ENCODE measurements at regions of chr18 and their contacts with region 1.

Region 1: DNA sequence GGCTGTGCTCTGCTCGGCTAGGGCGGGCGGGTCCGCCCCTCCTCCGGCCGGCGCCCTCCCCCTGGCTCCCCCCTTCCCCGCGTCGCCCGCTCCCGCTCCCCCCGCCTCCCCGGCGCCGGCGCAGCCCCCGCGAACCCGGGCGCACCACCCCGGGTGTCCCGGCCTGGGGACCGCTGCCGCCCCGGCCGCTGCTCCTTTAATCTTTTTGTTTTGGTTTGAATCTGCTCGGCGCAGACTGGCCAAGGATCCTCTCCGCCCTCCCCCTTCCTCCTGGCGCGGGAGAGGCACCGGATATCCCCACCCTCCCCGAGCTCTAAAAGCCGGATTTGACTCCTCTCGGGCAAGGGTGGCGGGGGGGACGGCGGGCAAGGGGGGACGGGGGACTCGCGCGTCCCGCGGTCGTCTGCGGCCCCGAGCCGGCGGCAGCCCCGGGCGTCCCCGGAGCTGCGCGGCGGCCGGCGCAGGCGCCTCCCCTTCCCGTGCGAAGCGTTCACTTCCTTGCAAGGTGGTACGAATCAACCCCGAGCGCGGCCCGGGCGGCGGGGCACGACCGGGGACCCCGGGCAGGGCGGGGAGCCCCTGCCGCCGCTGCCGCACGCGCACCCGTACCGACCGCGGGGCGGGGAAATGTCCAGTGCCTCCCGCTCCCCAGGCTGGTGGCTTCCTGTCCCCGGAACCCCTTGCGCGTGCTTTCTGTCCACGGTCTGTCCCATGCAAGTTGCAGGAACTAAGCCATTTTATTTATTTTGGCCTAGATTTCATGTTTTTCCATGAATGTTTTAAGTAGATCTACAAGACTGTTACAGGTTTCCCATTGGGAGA is at the start of gene PTGR3:
- DNase-seq: peak; percentile 87
- H3K4me3 ChIP-seq: peak within 1 kb of the TSS; percentile 88 to 93
- H3K27ac ChIP-seq: peak within 1 kb of the TSS; percentile 93 to 97
- H3K4me1 ChIP-seq: peaks cover 18% of the 10 kb centered on the region
- H3K27me3 ChIP-seq: no peaks in the 10 kb centered on the region
- CTCF ChIP-seq: no peak
- POLR2A ChIP-seq: no peak
- total RNA-seq, gene PTGR3: 13.9 to 27.9 TPM

Region 2: GRCh38 chr18:75066936-75067335 is 142.4 kb before region 1 on chr18:
- intact Hi-C with region 1: no loop called
- DNase-seq: no peak
- H3K4me3 ChIP-seq: no peak overlapping the region
- H3K27ac ChIP-seq: no peak overlapping the region
- H3K4me1 ChIP-seq: no peaks in the 10 kb centered on the region
- H3K27me3 ChIP-seq: no peaks in the 10 kb centered on the region
- CTCF ChIP-seq: no peak
- POLR2A ChIP-seq: no peak

Region 3: DNA sequence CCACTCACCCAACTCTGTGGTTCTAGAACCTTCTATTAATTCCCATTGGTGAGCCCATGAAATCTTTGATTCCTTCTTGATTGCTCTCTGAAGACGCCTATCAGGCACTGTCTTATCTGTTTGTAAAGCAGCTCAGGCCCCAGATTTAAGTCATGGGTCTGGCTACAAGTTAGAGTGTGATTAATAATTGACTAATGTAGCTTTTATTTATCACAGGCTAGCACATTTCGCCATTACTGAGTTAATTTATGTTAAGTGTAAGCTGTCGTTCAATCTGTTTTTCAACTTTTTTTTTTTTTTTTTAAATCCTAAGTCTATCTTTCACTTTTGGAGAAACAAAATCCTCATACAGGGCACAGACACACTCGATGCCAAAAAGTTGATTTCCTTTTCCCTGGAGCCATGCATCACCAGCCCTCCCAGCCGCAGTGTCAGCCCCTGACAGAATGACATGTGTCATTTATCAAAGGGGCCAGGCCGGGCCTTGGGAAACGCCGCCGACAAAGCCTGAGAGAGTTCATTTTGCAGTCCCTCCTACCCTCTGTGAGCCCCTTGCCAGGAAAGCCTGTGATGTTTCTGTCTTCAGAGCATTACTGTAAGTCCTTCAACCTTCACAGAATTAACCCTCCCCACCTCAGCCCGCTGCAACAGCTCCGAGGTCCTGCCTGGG is 17.1 kb after region 1 on chr18:
- intact Hi-C with region 1: no loop called
- DNase-seq: no peak
- H3K4me3 ChIP-seq: no peak overlapping the region
- H3K27ac ChIP-seq: peak overlapping the region; percentile 37 to 59
- H3K4me1 ChIP-seq: peaks cover 30% of the 10 kb centered on the region
- H3K27me3 ChIP-seq: no peaks in the 10 kb centered on the region
- CTCF ChIP-seq: no peak
- POLR2A ChIP-seq: no peak

Region 4: DNA sequence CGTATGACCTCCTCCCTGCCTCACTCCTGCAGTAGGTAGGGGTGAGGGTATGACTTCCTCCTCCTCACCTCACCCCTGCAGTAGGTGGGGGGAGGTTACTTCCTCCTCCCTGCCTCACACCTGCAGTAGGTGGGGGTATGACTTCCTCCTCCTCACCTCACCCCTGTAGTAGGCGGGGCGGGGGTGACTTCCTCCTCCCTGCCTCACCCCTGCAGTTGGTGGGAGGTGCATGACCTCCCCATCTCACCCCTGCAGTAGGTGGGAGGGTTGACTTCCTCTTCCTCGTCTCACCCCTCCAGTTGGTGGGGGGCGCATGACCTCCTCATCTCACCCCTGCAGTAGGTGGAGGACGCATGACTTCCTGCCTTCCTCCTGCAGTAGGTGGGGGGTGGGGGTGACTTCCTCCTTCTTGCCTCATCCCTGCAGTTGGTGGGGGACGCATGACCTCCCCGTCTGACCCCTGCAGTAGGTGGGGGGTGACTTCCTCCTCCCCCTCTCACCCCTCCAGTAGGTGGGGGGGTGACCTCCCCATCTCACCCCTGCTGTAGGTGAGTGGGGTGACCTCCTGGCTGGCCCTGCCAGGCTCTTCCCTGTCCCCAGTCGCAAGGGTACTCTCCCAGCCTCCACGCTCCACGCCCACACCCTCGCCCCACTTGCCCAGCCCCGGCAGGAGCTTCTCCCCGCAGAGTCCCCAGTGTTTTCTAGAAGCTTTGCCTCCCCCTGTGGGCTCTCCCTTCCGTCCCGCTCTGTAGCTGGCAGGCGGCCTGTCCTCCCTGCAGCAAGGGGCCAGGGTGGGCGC is 40.5 kb after region 1 on chr18:
- intact Hi-C with region 1: loop called (anchors 10 kb)
- DNase-seq: no peak
- H3K4me3 ChIP-seq: peak overlapping the region; percentile 22 to 48
- H3K27ac ChIP-seq: peak overlapping the region; percentile 82 to 84
- H3K4me1 ChIP-seq: peaks cover 15% of the 10 kb centered on the region
- H3K27me3 ChIP-seq: no peaks in the 10 kb centered on the region
- CTCF ChIP-seq: no peak
- POLR2A ChIP-seq: no peak

Region 5: DNA sequence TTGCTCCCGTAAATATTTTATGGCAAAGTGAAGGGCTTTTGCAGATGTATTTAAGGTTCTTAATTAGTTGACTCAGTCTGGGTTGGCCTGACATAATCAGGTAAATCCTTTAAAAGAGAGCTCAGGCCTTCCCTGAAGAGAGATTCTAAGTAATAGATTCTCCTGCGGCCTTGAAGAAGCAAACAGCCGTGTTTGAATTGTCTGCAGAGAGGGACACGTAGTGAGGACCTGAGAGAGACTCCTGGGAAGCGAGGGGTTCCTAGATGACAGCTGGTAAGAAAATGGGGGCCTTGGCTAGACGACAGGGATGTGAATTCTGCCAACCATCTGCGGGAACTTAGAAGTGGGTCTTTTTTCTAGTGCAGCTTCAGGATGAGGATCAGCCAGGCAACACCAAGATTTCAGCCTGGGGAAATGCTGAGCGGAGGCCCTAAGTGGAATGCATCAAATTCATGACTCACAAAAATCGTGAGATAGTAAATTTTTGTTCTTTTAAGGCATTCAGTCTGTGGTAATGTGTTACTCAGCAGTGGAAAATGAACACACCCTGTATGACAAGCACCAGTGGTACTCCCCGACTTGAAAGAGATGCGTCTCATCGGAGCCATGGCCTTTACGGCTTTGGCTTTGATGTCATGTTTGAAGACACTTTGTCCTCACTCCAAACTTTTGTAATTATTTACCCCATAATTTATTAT is 280.3 kb after region 1 on chr18:
- intact Hi-C with region 1: loop called (anchors 10 kb)
- DNase-seq: peak; percentile 29
- H3K4me3 ChIP-seq: no peak overlapping the region
- H3K27ac ChIP-seq: peak overlapping the region; percentile 14 to 72
- H3K4me1 ChIP-seq: no peaks in the 10 kb centered on the region
- H3K27me3 ChIP-seq: no peaks in the 10 kb centered on the region
- CTCF ChIP-seq: no peak
- POLR2A ChIP-seq: no peak

Measured in testis (tissue), 5 donors.